ENCODE measurements at regions of chr3 and their contacts with region 1.

Region 1: GRCh38 chr3:10213156-10213792 is 35.0 kb upstream of the TATDN2 start:
- DNase-seq: no peak
- CTCF ChIP-seq: no peak

Region 2: DNA sequence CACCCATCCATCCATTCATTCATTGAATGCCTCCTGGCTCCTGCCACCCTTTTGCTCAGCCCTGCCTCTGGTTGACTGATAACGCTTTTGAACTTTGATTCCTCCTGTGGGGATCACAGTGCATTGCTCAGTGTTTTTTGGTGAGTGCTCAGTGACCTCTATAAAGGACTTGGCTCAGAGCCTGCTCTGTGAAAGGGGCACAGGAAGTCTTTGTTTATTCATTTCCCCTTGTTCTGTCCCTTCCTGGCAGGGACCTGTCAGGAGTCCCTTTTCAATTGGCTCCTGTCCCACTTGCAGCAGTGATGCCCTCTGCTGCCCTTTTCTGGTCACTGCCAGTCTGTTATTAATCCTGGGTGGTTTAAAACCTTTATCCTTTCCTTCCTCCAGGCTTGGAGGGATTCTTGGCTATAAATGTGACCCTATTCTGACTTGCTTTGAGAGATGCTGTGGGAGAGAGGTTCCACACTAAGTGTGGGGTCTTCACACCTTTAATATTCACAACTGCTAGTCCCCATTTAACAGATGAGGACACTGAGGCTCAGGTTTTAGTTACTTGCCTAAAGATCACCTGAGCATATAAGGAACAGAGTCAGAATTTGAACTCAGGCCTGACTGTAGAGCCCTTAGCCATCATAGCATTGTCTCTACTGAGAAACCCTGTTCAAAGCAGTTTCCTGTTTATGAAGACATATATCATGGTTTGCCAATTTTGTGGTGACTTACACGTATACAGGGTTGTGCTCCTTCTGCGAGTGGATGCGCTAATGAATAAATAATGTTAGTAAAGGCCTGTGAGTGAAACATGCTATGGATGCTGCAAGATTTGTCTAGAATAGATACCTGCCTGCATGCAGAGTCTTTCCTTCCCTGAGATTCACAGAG is 11.8 kb after region 1 on chr3:
- CTCF ChIA-PET with region 1: interaction called, 13 read pairs
- POLR2A ChIA-PET with region 1: no interaction called
- DNase-seq: peak; percentile 75
- CTCF ChIP-seq: peak; percentile 80

Region 3: DNA sequence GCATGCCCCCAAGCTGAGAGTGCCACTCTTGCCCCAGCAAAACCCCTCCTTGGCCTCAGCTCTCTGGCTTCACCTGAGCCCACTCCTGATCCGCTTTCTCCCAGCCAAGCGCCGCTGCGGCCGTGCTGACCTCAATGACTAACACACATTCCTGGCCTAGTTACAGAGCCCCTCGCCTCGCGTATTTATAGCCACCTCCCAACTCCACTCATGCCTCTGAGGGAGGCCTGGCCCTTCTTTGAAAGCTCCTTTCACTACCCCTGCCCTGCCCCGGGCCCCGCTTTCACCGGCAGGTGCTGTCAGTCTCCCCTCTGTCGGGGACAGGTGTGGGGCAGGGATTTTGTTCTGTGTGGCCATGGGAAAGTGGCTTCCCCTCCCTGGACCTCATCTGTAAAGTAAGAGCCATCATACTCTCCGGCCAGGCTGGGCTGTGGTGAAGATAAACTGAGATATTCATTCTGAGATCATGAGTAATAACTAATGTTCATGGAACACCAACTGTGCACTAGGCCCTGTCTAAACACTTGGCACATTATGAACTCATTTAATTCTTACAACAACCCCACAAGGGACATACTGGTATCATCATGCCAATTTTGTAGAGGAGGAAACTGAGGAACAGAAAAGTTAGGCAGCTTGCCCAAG is 305.4 kb after region 1 on chr3:
- CTCF ChIA-PET with region 1: no interaction called
- POLR2A ChIA-PET with region 1: no interaction called
- DNase-seq: no peak
- CTCF ChIP-seq: no peak